Left cardiac atrium (tissue), 4 donors: ENCODE measurements at regions of chr11 and their contacts with region 1.

Region 1: GRCh38 chr11:126355324-126355925 is at the start of gene ST3GAL4:
- DNase-seq: peak; percentile 87
- ATAC-seq: peak; percentile 78 to 83
- total RNA-seq, gene ST3GAL4: 57.1 to 109 TPM

Region 2: DNA sequence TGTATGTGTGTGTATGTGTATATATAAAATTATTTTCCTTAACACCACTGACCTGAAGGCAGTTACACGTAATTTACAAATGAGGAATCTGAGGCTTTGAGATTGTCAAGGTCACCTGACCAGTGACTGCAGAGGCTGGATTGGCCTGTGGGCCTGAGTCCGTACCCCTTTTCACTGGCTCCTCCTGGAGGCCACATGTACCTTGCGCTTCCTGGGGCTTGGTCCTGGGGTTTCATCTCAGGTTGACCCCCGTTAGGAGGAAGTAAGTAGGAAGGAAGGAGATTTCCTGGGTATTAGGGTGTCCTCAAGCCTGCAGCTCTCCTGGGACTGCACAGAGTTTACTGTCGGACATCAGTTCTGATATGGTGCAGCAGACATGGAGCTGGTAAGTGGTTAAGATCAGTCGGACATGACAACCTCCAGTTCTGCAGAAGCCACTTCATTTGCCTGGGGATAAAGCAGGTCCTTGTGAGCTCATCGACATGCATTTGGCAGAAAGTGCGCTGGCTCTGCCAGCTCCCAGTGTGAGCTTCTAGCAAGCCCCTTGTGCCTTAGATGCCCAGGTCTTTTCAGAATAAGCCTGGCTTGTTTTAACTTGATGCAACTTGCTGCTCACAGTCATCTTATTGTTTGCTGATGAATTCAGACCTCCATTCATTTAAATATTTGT is 36.7 kb after region 1 on chr11:
- intact Hi-C with region 1: loop called in 1 of 2 experiments (anchors 5 kb)
- DNase-seq: peak; percentile 52
- ATAC-seq: peak; percentile 17 to 58

Region 3: DNA sequence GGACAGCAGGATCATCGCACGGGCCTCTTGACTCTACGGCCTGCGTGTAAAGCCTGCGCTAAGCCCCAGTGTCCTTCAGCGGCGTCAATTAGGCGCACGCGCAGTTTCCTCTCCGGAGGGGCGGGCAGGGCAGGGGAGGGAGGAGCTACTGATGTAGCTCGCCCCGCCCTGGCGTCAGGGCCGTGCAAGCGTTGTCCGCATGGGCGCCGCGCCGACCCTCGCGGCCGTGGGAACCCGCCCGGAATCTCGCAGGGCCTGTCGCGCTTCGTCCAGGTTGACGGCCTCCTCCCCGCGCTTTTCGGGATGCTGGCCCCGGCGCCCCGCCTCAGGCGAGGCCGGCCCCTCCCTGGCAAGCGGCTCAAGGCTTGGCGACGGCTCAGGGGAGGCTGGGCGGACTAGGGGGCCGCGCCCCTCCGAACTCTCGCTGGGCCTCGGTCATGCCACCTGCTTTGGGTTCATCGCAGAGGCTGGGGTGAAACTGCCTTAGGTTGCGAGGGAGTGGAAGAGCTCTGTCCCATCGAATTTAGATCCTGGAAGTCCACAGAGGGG is 61.2 kb after region 1 on chr11:
- intact Hi-C with region 1: loop called in 1 of 2 experiments (anchors 5 kb)
- DNase-seq: peak; percentile 95
- ATAC-seq: peak; percentile 81 to 82